ENCODE measurements at regions of chr5 and their contacts with region 1.

Region 1: GRCh38 chr5:165209086-165209727 is 1703.8 kb downstream of the MAT2B start:
- DNase-seq: no peak
- ATAC-seq: no peak
- H3K4me3 ChIP-seq: no peak overlapping the region
- H3K27ac ChIP-seq: no peak overlapping the region
- H3K4me1 ChIP-seq: no peaks in the 10 kb centered on the region
- H3K27me3 ChIP-seq: no peaks in the 10 kb centered on the region

Region 2: DNA sequence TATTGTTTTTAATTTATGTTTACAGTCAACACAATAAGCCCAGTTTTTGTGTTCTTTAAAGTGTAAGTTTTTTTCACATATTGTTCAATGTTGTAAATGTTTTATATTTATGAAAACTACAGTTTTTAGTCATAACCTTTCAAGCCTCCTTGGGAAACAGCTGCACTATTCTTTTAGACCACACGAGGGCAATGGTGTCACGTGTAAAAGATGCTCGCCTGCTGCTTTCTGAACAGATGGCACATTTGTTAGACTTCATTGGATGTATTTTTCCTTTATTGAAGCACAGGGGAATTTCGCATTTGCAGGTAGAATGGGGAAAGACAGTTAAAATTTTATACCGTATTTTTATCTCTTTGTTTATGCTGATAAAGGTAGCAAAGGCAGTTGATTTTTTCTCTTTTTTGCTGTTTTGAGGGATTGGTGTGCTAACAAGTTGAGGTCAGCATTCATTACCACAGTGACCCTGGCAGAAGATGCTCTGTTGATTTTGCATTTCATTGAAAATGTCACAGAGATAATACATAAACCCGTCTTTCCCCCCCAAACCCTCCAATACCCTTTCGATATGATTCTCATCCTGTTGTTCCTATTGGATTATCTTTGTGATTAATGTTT is 1644.8 kb before region 1 on chr5:
- intact Hi-C with region 1: loop called in 2 of 4 experiments (anchors 10 kb)
- DNase-seq: peak in 2 of 3 donors; percentile 22 to 46
- ATAC-seq: peak in 1 of 2 donors; percentile 46
- H3K4me3 ChIP-seq: no peak overlapping the region
- H3K27ac ChIP-seq: no peak overlapping the region
- H3K4me1 ChIP-seq: peaks cover 3% of the 10 kb centered on the region
- H3K27me3 ChIP-seq: no peaks in the 10 kb centered on the region

Region 3: DNA sequence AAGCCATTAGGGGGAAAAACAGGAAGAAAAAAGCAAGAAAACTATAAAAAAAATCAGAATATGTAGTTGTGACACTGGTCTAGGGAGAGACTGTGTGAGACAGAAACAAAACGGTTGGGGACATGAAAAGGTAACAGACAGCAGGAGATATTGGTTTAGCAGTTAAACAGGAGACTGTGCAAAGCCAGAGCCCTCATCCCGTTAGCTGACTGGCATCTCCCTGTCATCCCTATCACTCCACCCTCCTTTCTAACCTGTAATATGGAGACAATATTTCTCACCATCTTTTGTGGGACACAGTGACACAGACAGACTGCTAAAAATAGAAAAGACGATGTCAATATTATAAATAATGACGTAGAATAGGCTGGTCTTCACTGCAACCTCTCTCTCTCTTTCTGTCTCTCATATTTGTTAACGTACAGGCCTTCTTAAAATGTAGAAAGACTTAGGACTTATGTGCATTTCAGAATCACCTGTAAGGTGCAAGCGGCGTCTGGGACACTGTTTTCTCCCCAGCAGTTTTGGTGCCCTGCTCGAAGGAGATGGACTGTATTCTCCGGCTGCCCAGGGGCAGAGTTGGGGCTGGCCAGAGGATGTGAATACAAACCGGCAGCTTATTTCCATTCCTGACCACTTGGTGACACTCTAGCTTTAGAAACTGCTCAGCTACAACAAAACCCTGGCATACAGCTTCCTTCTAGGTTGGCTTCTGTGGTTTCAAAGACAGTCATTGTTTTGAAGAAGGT is 1513.2 kb before region 1 on chr5:
- intact Hi-C with region 1: loop called in 1 of 4 experiments (anchors 5 kb)
- DNase-seq: no peak
- ATAC-seq: peak; percentile 71 to 76
- H3K4me3 ChIP-seq: no peak overlapping the region
- H3K27ac ChIP-seq: no peak overlapping the region
- H3K4me1 ChIP-seq: no peaks in the 10 kb centered on the region
- H3K27me3 ChIP-seq: no peaks in the 10 kb centered on the region

Region 4: GRCh38 chr5:164013077-164013670 is 1196.0 kb before region 1 on chr5:
- intact Hi-C with region 1: loop called in 1 of 4 experiments (anchors 10 kb)
- DNase-seq: peak in 1 of 3 donors; percentile 20
- ATAC-seq: peak in 1 of 2 donors; percentile 40
- H3K4me3 ChIP-seq: no peak overlapping the region
- H3K27ac ChIP-seq: no peak overlapping the region
- H3K4me1 ChIP-seq: no peaks in the 10 kb centered on the region
- H3K27me3 ChIP-seq: no peaks in the 10 kb centered on the region

Region 5: DNA sequence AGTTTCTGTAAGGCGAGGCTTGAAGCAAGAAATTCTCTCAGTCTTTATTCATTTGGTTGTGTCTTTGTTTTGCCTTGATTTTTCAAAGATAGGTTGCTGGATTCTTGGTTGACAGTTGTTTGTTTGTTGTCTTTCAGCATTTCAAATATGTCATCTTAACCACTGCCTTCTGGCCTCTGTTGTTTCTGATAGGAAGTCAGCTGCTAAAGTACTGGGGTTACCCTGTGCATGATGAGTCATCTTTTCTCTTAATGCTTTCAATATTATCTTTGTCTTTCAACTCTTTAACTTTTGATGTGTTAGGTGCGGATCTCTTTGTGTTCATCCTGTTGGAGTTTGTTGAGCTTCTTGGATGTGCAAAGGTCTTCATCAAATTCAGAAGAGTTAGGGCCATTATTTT is 132.5 kb before region 1 on chr5:
- intact Hi-C with region 1: no loop called
- DNase-seq: no peak
- ATAC-seq: no peak
- H3K4me3 ChIP-seq: no peak overlapping the region
- H3K27ac ChIP-seq: no peak overlapping the region
- H3K4me1 ChIP-seq: no peaks in the 10 kb centered on the region
- H3K27me3 ChIP-seq: no peaks in the 10 kb centered on the region